Activated CD4-positive, alpha-beta T cell treated with anti-CD3 and anti-CD28 coated beads for 36 hours (primary cell): ENCODE measurements at regions of chrX and their contacts with region 1.

Region 1: GRCh38 chrX:46758906-46759644 is at the start of gene SLC9A7:
- DNase-seq: peak; percentile 88
- ATAC-seq: peak; percentile 84
- H3K4me3 Mint-ChIP-seq: peak within 1 kb of the TSS; percentile 92
- H3K27ac Mint-ChIP-seq: peak within 1 kb of the TSS; percentile 91
- H3K4me1 Mint-ChIP-seq: peaks cover 28% of the 10 kb centered on the region
- H3K27me3 Mint-ChIP-seq: no peaks in the 10 kb centered on the region
- total RNA-seq, gene SLC9A7: 16.3 to 19.2 TPM

Region 2: DNA sequence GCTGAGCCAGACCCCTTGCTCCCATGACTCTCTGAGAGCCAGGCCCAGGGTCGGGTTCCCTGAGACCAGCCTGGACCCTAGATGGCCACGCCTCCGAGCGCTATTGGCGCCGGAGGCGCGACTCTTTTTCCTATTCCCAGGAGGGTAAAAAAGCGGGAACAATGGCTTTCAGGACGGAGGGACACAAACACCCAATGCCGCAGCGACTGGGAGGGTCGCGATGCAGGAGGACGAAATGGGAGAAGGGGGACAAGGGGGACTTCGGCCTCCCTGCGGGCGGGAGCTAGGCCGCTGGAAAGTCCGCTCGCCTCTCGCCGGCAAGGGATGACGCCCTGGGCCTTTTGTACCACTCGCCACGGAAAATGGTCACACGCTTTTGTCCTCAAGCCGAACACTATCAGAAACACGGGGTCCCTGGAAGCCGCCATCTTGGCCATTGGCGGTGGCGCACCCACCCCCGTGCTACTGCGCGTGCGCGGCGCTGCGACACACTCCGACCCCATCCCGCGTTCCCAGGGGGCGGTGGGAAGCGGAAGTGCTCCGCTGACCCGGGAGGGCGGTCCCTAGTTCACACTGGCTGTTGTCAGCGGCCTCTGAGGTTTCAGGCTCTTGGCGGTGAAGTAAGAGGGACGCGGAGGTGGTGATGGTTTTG is 312.2 kb before region 1 on chrX:
- CTCF ChIA-PET with region 1: no interaction called
- POLR2A ChIA-PET with region 1: no interaction called
- intact Hi-C with region 1: loop called in 1 of 2 experiments (anchors 2 kb)
- DNase-seq: peak; percentile 92
- ATAC-seq: peak; percentile 94
- H3K4me3 Mint-ChIP-seq: peak overlapping the region; percentile 82
- H3K27ac Mint-ChIP-seq: peak overlapping the region; percentile 96
- H3K4me1 Mint-ChIP-seq: peaks cover 22% of the 10 kb centered on the region
- H3K27me3 Mint-ChIP-seq: no peaks in the 10 kb centered on the region

Region 3: DNA sequence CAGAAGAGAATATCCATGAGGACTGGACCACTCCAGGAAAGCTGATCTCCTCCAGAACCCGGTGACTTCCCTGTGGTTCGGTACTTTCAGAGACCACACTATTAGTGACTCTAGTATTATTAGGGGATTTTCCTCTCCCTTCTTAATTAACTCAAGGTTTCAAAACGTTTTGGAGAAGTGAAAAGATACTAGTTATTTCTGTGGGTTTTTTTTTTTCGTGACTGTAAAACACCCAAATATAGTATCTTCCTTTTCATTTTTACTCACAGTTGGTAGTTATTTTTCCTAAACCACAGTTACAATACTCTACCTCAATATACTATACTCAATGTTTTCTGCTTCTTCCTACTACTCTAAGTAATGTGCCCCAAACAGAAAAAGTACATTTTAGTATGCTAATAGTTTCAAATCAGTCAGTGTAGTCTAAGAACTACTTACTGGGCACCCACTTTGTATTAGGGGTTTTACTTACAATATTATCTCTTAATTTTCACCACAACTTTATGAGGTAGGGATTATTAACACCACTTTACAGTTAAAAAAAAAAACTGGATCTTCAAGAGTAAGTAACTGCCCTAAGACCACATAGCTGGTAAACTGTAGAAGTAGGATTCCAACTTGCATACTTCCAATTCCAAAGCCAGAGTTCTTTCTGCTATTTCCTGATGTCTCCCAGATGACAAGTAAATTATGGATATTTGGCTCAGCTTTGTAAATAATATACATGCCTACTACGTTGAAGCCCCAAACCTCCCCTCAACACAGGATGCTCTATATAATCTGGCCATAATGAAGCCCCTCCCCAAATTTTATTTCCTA is 45.2 kb before region 1 on chrX:
- CTCF ChIA-PET with region 1: no interaction called
- POLR2A ChIA-PET with region 1: no interaction called
- intact Hi-C with region 1: loop called in 1 of 2 experiments (anchors 2 kb)
- DNase-seq: no peak
- ATAC-seq: peak; percentile 38
- H3K4me3 Mint-ChIP-seq: no peak overlapping the region
- H3K27ac Mint-ChIP-seq: peak overlapping the region; percentile 82
- H3K4me1 Mint-ChIP-seq: peaks cover 67% of the 10 kb centered on the region
- H3K27me3 Mint-ChIP-seq: no peaks in the 10 kb centered on the region

Region 4: DNA sequence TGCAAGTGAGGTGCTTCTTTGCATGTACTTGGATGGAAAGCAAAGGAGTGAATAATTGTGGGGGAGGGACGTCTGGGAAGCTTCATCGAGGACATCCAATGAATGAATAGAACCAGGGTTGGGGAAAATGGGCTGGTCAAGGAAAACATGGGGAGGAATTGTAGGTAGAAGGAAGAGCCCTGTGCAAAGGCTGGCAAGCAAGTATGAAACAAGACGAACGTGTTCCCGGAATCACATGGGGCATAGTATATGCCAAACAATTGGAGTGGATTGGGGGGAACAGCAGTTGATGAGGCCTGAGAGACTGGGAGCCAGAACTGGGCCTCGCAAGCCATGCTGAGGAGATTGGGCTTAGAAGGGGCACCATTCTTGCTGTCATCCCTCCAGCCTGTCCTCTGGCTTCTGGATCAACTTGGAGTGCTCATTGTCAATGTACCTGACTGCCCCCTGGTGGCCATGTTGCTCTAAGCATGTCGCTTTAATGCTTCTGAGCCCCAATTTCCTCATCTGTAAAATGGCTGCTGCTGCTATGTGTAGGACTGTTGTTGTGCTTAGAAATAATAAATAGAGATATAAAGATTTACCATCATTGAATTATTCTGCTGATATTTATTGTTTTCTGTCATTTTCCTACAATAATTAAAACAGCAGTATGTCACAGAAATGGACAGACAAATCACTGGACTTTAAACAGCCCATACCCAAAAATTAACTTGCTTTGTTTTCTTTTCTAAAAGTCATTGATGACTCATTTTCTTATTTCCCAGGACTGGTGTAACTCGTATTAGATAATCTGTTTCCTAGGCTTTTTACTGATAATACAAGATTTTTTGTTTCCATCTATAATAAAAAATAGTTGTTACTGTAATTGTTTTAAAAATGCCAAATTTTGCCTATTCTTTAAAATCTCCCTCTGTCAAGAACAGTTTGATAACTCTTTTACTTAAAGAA is 219.5 kb after region 1 on chrX:
- CTCF ChIA-PET with region 1: no interaction called
- POLR2A ChIA-PET with region 1: no interaction called
- intact Hi-C with region 1: loop called in 1 of 2 experiments (anchors 1 kb)
- DNase-seq: peak; percentile 88
- ATAC-seq: peak; percentile 86
- H3K4me3 Mint-ChIP-seq: no peak overlapping the region
- H3K27ac Mint-ChIP-seq: no peak overlapping the region
- H3K4me1 Mint-ChIP-seq: no peaks in the 10 kb centered on the region
- H3K27me3 Mint-ChIP-seq: no peaks in the 10 kb centered on the region

Region 5: DNA sequence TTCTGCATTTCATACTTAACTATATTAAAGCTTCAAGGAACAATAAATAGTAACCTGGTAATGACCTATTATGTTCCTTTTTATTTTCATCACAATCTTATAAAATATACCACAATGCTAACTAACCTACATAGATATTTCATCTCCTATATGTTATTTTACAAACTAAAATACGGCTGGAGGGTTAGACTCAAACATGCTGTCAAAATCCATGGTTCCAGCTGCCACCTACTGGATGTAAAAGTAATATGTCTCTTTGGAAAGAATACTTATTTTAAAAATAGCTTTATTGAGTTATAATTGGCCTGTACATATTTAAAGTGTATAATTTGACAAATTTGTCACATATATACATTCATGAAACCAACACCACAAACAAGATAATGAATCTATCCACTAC is 334.2 kb after region 1 on chrX:
- CTCF ChIA-PET with region 1: no interaction called
- POLR2A ChIA-PET with region 1: no interaction called
- intact Hi-C with region 1: loop called (anchors 2 to 5 kb)
- DNase-seq: peak; percentile 10
- ATAC-seq: no peak
- H3K4me3 Mint-ChIP-seq: no peak overlapping the region
- H3K27ac Mint-ChIP-seq: no peak overlapping the region
- H3K4me1 Mint-ChIP-seq: peaks cover 10% of the 10 kb centered on the region
- H3K27me3 Mint-ChIP-seq: no peaks in the 10 kb centered on the region